Posterior vena cava (tissue), 2 donors: ENCODE measurements at regions of chr1 and their contacts with region 1.

Region 1: DNA sequence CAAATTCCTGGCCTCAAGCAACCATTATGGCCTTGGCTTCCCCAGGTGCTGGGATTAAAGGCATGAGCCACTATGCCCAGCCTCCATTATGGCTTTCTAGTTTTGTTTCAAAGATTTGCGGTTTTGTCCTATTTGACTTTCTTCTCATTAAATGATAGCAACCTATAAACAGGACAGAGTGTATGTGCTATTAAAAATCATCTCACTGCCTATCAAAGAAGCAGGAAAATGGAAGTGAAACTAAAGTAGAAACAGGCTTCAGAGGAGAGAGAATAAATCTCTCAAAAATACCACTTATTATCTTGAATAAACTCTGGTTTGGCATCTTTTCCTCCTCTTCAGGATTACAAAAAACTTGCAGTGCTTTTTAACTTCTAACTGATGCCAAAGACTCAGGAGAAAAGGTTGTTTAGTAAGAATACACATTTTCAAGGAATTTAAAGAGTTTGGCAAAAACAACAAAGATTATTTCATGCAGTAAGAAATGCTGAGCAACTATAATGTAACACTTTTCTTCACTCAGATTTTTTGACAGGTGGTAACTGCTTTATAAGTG is 28.7 kb downstream of the ACBD3 start:
- DNase-seq: no peak

Region 2: GRCh38 chr1:226083302-226084101 is 74.3 kb before region 1 on chr1:
- intact Hi-C with region 1: loop called in 1 of 2 experiments (anchors 2 kb)
- DNase-seq: peak; percentile 96

Region 3: GRCh38 chr1:226109829-226110248 is 48.0 kb before region 1 on chr1:
- intact Hi-C with region 1: no loop called
- DNase-seq: peak; percentile 96

Region 4: DNA sequence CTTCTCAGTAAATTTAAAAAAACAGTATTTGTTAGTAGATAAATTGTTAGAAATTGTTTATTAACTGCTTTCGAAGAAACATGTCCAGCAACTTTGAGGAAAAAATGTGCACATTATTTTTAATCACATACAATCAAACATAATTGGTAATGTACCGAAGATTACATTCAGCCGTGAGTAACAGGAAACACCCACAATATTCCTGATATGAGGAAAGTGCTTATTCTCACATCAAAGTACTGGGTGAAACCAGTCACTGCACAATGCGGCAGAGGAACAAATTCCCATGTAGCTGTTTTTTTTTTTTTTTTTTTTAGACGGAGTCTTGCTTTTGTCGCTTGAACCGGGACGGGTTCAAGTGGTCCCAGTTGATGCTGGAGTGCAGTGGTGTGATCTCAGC is 19.0 kb after region 1 on chr1:
- intact Hi-C with region 1: no loop called
- DNase-seq: no peak